Mammary epithelial cell (primary cell): ENCODE measurements at regions of chr16 and their contacts with region 1.

Region 1: DNA sequence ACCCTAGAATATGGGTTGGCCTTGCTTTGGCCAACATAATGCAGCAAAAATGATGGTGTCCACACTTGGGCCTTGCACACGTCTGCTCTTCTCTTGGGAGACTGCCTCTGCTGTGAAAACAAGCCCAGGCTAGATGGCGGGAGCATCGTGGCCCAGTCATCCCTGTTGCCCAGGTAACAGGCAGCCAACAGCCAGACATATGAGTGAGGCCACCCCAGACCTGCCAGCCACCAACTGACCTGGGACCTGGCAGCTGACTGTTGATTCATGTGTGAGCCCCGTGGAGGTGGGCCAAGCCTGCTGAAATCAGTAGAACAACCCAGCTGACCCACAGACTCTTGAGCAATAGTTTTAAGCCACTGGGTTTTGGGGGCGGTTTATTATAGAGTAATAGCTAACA is 39.4 kb upstream of the CDH3 start:
- DNase-seq: peak; percentile 99
- H3K4me3 ChIP-seq: no peak overlapping the region
- H3K27ac ChIP-seq: peak overlapping the region; percentile 83
- H3K4me1 ChIP-seq: peaks cover 15% of the 10 kb centered on the region
- H3K27me3 ChIP-seq: no peaks in the 10 kb centered on the region
- CTCF ChIP-seq: no peak

Region 2: GRCh38 chr16:68636064-68636560 is 30.4 kb after region 1 on chr16:
- CTCF ChIA-PET with region 1: no interaction called
- dilution Hi-C with region 1: no loop called
- in situ Hi-C with region 1: no loop called
- intact Hi-C with region 1: loop called (anchors 1 kb)
- DNase-seq: peak; percentile 97
- H3K4me3 ChIP-seq: peak overlapping the region in 2 of 3 experiments; percentile 14 to 32
- H3K27ac ChIP-seq: peak overlapping the region; percentile 97
- H3K4me1 ChIP-seq: peaks cover 25% of the 10 kb centered on the region
- H3K27me3 ChIP-seq: no peaks in the 10 kb centered on the region
- CTCF ChIP-seq: no peak

Region 3: GRCh38 chr16:68658258-68659008 is 52.7 kb after region 1 on chr16:
- CTCF ChIA-PET with region 1: no interaction called
- dilution Hi-C with region 1: loop called (anchors 5 kb)
- in situ Hi-C with region 1: no loop called
- intact Hi-C with region 1: no loop called
- DNase-seq: peak; percentile 99
- H3K4me3 ChIP-seq: no peak overlapping the region
- H3K27ac ChIP-seq: peak overlapping the region; percentile 99
- H3K4me1 ChIP-seq: peaks cover 64% of the 10 kb centered on the region
- H3K27me3 ChIP-seq: no peaks in the 10 kb centered on the region
- CTCF ChIP-seq: no peak

Region 4: DNA sequence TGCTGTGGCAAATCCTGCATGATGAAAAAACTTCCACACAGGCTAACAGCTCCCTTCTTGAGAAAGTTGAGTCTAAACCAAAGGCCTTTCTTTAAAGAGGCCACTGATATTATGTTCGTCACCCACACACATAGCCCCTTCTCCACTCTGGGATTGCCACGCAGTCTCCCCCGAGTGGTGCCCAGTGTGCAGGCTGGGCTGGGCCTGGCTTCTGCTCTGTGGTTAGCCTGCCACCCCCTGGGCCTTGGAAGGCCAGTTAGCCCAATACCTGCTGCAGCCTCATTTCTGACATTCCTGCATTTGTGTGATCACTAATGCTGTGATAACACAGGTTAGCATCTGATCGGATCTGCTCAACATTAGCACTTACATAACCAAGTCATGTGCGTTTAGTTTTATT is 84.2 kb after region 1 on chr16:
- CTCF ChIA-PET with region 1: no interaction called
- dilution Hi-C with region 1: loop called (anchors 5 kb)
- in situ Hi-C with region 1: no loop called
- intact Hi-C with region 1: no loop called
- DNase-seq: no peak
- H3K4me3 ChIP-seq: no peak overlapping the region
- H3K27ac ChIP-seq: no peak overlapping the region
- H3K4me1 ChIP-seq: no peaks in the 10 kb centered on the region
- H3K27me3 ChIP-seq: no peaks in the 10 kb centered on the region
- CTCF ChIP-seq: peak in 1 of 2 donors; percentile 4

Region 5: DNA sequence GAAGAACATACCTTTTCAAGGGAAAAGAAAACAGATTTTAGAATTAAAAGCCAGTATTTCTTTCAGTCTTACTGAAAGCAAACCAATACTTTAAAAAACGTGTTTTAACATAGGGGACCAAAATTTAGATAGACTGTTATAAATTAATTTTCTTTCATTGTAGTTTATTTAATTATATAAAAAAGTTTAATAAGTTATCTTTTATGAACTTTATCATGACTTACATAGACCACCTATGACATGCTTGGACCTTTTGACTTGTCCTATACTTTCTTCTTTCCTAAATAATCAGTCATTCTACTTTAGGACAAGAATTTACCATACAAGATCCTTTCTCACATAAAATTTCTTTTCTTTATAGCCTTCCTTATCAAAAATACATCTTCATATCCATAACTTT is 397.8 kb after region 1 on chr16:
- CTCF ChIA-PET with region 1: no interaction called
- dilution Hi-C with region 1: no loop called
- in situ Hi-C with region 1: no loop called
- intact Hi-C with region 1: no loop called
- DNase-seq: no peak
- H3K4me3 ChIP-seq: no peak overlapping the region
- H3K27ac ChIP-seq: no peak overlapping the region
- H3K4me1 ChIP-seq: peaks cover 4% of the 10 kb centered on the region
- H3K27me3 ChIP-seq: no peaks in the 10 kb centered on the region
- CTCF ChIP-seq: no peak